Dorsolateral prefrontal cortex (tissue), 120 donors: ENCODE measurements at regions of chr11 and their contacts with region 1.

Region 1: DNA sequence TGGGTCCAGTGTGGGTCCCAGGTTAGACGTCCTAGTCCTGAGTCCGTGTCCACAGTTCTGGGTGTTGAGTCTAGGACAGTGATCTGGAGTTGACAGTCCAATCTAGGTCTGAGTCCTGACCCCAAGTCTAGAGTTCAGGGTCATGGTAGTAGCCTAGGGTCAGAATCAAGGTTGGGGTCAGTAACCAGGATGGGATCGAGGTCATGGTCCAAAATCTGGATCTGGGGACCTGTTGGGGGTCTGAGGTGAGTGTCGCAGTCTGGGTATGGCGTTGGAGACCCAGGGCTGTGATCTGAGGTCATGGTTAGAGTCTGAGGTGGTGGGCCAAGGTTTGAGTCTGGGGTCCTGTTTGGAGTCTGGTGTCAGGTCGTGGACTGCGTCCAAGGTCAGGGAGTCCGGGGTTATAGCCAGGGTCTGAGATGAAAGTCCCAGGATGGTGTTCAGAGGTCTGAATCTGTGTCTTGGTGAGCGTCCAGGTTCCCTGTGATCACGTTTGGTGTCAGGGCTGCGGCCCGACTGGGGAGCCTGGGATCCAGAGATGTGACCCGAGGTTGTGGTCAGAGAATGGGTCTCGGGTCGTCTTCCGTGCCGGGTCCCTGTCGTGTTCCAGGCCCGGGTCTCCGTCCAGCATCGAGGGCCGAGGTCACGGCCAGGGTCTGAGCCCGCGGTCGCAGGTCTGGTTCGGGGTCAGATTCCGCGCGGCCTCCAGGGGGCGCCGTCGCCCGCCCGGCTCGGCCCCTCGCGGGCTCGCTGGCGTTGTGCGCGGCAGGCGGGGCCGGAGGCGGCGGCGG is 445 bp upstream of the GRK2 start:
- DNase-seq: peak in 7 of 10 donors; percentile 55 to 87 (median 74)
- H3K4me3 ChIP-seq: peak overlapping the region in 53 of 59 donors; percentile 11 to 92 (median 46)
- H3K27ac ChIP-seq: peak overlapping the region in 56 of 59 donors; percentile 23 to 93 (median 83)
- H3K27me3 ChIP-seq: no peaks in the 10 kb centered on the region
- CTCF ChIP-seq: peak; percentile 42 to 85 (median 74)

Region 2: GRCh38 chr11:67118801-67119584 is 146.8 kb before region 1 on chr11 and contains the start of gene KDM2A:
- intact Hi-C with region 1: loop called in 1 of 2 experiments (anchors 10 kb)
- DNase-seq: peak; percentile 94 to 99 (median 98)
- H3K4me3 ChIP-seq: peak within 1 kb of the TSS; percentile 68 to 97 (median 90)
- H3K27ac ChIP-seq: peak within 1 kb of the TSS; percentile 90 to 100 (median 98)
- H3K27me3 ChIP-seq: no peaks in the 10 kb centered on the region
- CTCF ChIP-seq: peak in 47 of 56 donors; percentile 9 to 74 (median 45)
- total RNA-seq, gene KDM2A: 56.5 to 97.4 (median 71.9) TPM

Region 3: DNA sequence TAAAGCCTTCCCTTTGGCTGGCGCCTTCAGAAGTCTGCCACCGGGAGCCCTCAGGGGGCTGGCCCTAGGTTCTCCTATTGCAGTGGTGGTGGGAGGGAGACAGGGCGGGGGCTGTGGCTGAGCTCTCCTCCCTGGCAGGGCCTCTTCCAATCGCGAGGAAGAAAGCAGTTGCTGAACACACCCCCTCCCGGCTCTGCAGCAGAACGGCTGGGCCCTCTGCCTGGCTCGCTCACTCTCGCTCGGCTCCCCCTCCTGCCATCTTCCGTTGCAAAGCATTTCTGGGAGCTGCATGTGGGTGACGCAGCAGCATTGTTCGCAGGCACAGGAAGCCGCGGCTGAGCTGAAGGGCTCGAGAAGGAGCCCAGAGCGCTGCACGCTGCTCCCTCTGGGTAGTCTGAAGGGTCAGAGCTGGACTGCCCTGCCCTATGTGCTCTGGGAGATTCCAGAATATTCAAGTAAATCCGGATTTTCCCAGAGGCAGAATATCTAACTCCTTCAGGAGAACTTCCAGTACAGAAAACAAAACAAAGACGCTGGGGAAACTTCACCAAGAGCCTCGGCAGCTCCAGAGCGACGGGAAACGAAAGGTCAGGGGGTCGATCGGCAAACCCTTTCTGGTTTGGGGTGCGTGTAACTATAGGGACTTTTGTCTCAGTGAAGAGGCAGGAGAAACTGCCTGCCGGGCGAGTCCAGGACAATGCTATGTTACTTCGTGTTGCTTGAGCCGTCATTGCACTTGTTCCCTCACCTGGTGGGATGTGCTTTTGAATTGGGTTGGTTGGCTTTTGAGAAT is 25.8 kb before region 1 on chr11:
- intact Hi-C with region 1: loop called in 1 of 2 experiments (anchors 2 kb)
- DNase-seq: peak; percentile 82 to 99 (median 97)
- H3K4me3 ChIP-seq: peak overlapping the region; percentile 53 to 99 (median 75)
- H3K27ac ChIP-seq: peak overlapping the region; percentile 29 to 99 (median 91)
- H3K27me3 ChIP-seq: no peaks in the 10 kb centered on the region
- CTCF ChIP-seq: peak in 51 of 56 donors; percentile 1 to 64 (median 42)

Region 4: GRCh38 chr11:67288452-67289225 is 22.8 kb after region 1 on chr11:
- intact Hi-C with region 1: loop called (anchors 2 kb)
- DNase-seq: peak; percentile 58 to 88 (median 76)
- H3K4me3 ChIP-seq: peak overlapping the region; percentile 63 to 98 (median 87)
- H3K27ac ChIP-seq: peak overlapping the region; percentile 27 to 99 (median 95)
- H3K27me3 ChIP-seq: no peaks in the 10 kb centered on the region
- CTCF ChIP-seq: peak in 34 of 56 donors; percentile 4 to 55 (median 30)

Region 5: DNA sequence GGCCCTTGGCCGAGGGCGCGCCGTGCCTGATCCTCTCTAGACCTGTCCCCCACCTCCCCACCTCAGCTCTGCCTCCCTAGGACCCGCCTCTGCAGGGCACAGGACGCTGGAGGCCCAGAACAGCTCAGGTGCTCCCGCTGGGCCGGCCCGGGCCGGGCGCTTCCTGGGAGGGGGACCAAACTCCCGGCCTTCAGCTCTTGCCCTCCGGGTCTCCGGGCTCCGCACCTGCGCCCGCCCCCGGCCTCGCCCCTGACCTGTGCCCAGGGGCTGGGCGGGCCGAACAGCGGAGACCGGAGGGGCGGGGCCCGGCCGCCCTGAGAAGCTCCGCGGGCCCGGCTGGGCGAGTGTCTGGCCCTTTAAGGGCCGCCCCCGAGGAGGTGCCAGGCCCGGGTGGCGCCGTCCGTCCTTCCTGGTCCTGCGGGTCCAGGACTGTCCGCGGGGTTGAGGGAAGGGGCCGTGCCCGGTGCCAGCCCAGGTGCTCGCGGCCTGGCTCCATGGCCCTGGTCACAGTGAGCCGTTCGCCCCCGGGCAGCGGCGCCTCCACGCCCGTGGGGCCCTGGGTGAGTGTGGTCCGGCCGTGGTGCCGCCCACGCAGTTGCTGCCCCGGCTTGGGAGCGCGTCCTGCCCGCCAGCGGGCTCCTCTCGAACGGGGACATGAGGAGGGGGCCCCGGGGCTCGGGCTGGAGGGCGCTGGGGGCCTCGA is 37.5 kb after region 1 on chr11 and contains the start of gene SSH3:
- intact Hi-C with region 1: loop called in 1 of 2 experiments (anchors 1 kb)
- DNase-seq: peak; percentile 59 to 85 (median 73)
- H3K4me3 ChIP-seq: peak within 1 kb of the TSS; percentile 56 to 98 (median 90)
- H3K27ac ChIP-seq: peak within 1 kb of the TSS; percentile 29 to 95 (median 87)
- H3K27me3 ChIP-seq: no peaks in the 10 kb centered on the region
- CTCF ChIP-seq: peak in 7 of 56 donors; percentile 9 to 31 (median 20)
- total RNA-seq, gene SSH3: 15.0 to 46.9 (median 26.2) TPM

Region 6: GRCh38 chr11:67317205-67317887 is 51.5 kb after region 1 on chr11:
- intact Hi-C with region 1: loop called (anchors 1 kb)
- DNase-seq: peak; percentile 92 to 98 (median 96)
- H3K4me3 ChIP-seq: peak overlapping the region; percentile 60 to 99 (median 86)
- H3K27ac ChIP-seq: peak overlapping the region; percentile 69 to 99 (median 96)
- H3K27me3 ChIP-seq: no peaks in the 10 kb centered on the region
- CTCF ChIP-seq: peak; percentile 92 to 99 (median 97)

Region 7: GRCh38 chr11:67382276-67383136 is 116.7 kb after region 1 on chr11:
- intact Hi-C with region 1: loop called (anchors 10 kb)
- DNase-seq: peak; percentile 73 to 89 (median 81)
- H3K4me3 ChIP-seq: no peak overlapping the region
- H3K27ac ChIP-seq: peak overlapping the region in 1 of 59 donors; percentile 4
- H3K27me3 ChIP-seq: no peaks in the 10 kb centered on the region
- CTCF ChIP-seq: peak; percentile 64 to 99 (median 96)